Panc1 (cell line): ENCODE measurements at regions of chr9 and their contacts with region 1.

Region 1: DNA sequence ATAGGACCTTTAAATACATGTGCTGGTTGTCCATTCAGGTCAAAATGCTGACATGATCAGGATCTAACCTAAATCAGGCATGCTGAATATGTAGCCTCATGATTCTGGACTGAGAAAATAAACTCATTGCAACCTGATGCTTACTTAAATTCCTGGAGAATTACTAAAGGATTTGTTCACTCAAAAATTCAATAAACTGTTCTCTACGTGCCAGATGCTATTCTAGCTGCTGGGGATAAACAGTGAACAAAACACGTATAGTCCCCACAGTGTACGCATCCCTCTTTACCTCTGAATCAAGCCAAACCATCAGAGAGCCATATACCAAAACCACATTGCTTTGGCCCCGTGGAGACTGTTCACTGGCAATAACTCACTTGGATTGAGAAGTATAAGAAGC is 6.1 kb downstream of the SCAI start:
- DNase-seq: no peak
- ATAC-seq: no peak
- H3K4me3 ChIP-seq: no peak overlapping the region
- H3K27ac ChIP-seq: no peak overlapping the region
- H3K4me1 ChIP-seq: no peaks in the 10 kb centered on the region
- H3K27me3 ChIP-seq: no peaks in the 10 kb centered on the region
- CTCF ChIP-seq: no peak

Region 2: GRCh38 chr9:124658165-124659017 is 478.8 kb before region 1 on chr9:
- CTCF ChIA-PET with region 1: no interaction called
- POLR2A ChIA-PET with region 1: no interaction called
- in situ Hi-C with region 1: no loop called
- intact Hi-C with region 1: no loop called
- DNase-seq: no peak
- ATAC-seq: peak; percentile 93
- H3K4me3 ChIP-seq: peak overlapping the region; percentile 73 to 77
- H3K27ac ChIP-seq: peak overlapping the region; percentile 98
- H3K4me1 ChIP-seq: peaks cover 36% of the 10 kb centered on the region
- H3K27me3 ChIP-seq: no peaks in the 10 kb centered on the region
- CTCF ChIP-seq: no peak

Region 3: GRCh38 chr9:125099816-125100215 is 37.4 kb before region 1 on chr9:
- CTCF ChIA-PET with region 1: no interaction called
- POLR2A ChIA-PET with region 1: no interaction called
- in situ Hi-C with region 1: no loop called
- intact Hi-C with region 1: loop called (anchors 2 kb)
- DNase-seq: no peak
- ATAC-seq: no peak
- H3K4me3 ChIP-seq: no peak overlapping the region
- H3K27ac ChIP-seq: no peak overlapping the region
- H3K4me1 ChIP-seq: no peaks in the 10 kb centered on the region
- H3K27me3 ChIP-seq: no peaks in the 10 kb centered on the region
- CTCF ChIP-seq: no peak

Region 4: DNA sequence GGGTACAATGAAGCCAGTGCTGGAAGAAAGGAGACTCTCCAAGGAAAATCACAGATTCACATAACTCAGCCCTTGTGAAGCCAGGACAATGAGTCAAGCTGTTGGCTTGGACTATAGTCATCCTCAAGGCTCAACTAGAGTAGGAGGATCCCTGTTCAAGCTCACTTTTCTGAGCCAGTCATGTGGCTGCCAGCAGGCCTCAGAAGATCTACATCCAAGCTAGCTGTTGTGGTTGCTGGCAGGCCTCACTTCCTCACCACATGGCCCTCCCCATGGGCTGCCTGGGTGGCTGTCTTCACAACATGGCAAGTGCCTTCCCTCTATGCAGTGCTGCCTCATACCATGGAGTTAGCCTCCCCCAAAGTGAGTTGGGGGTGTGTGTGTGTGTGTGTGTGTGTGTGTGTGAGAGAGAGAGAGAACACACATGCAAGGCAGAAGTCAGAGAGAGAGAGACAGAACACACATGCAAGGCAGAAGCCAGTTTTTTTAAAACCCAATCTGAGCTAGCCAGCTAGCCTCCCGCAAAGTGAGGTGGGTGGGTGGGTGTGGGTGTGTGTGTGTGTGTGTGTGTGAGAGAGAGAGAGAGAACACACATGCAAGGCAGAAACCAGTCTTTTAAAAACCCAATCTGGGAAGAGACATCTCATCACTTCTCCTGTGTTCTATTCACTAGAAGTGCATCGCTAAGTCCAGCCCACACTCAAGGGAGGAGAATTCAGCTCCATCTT is 11.0 kb before region 1 on chr9:
- CTCF ChIA-PET with region 1: no interaction called
- POLR2A ChIA-PET with region 1: no interaction called
- in situ Hi-C with region 1: no loop called
- intact Hi-C with region 1: no loop called
- DNase-seq: no peak
- ATAC-seq: no peak
- H3K4me3 ChIP-seq: no peak overlapping the region
- H3K27ac ChIP-seq: no peak overlapping the region
- H3K4me1 ChIP-seq: no peaks in the 10 kb centered on the region
- H3K27me3 ChIP-seq: no peaks in the 10 kb centered on the region
- CTCF ChIP-seq: no peak

Region 5: DNA sequence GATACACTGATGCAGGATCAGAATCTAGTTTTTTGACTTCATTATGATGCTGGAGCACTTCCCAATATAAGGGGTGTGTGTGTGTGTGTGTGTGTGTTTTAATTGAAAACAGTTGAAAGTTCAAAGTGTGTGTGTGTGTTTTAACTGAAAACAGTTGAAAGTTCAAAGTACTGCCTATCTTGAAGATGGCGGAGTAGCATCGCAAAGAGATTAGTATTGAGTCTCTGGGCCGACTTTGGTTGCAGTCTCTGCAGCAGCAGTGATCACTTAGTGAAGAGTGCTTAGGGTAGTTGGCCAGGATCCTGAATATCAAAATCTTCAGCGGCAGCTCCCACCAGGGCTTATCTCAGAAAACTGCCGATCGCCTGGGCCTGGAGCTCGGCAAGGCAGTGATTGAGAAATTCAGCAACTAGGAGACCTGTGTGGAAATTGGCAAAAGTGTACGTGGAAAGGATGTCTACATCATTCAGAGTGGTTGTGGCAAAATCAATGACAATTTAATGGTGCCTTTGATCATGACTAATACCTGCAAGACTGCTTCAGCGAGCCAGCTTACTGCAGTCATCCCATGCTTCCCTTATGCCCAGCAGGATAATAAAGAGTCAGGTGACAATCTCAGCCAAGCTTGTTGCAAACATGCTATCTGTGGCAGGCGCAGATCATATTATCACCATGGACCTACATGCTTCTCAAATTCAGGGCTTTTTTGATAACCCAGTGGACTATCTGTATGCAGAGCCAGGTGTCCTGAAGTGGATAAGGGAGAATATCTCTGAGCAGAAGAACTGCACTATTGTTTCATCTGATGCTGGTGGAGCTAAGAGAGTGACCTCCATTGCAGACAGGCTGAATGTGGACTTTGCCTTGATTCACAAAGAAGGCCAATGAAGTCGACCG is 13.4 kb after region 1 on chr9:
- CTCF ChIA-PET with region 1: no interaction called
- POLR2A ChIA-PET with region 1: no interaction called
- in situ Hi-C with region 1: no loop called
- intact Hi-C with region 1: no loop called
- DNase-seq: no peak
- ATAC-seq: no peak
- H3K4me3 ChIP-seq: no peak overlapping the region
- H3K27ac ChIP-seq: no peak overlapping the region
- H3K4me1 ChIP-seq: no peaks in the 10 kb centered on the region
- H3K27me3 ChIP-seq: no peaks in the 10 kb centered on the region
- CTCF ChIP-seq: no peak

Region 6: DNA sequence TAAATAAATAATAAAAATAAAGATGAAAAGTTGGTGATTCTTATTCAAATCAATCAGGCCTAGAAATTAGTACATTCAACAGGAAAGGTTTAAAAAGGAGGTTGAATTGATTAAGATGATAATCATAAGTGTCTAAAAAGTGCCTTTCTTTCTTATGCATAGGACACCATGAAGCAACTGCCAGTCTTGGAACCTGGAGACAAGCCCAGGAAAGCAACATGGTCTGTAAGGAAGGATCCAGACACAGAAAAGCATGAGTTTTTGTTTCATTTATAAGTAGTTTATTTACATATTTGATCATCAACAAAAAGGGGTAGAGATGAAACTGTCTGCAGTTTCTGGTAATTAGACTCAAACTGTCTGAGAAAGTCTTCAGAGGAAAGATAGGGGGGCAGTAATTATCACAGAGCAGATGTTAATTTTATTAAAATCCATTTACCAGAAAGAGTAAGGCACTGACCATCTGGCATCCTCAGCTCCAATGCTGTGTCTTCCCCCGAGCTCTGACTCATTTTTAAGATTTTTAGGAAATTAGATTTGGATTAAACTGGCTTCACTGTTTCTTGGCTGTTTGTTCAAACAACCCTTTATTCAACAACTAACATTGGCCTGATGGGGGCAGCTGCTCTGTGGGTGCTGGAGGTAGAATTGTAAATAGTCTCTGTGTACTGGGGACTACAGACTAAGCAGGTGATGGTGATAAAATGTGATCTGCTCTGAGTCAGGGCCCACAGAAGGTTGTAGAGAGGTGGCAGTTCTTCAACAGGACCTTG is 65.8 kb after region 1 on chr9:
- CTCF ChIA-PET with region 1: no interaction called
- POLR2A ChIA-PET with region 1: no interaction called
- in situ Hi-C with region 1: no loop called
- intact Hi-C with region 1: no loop called
- DNase-seq: no peak
- ATAC-seq: no peak
- H3K4me3 ChIP-seq: no peak overlapping the region
- H3K27ac ChIP-seq: no peak overlapping the region
- H3K4me1 ChIP-seq: peaks cover 6% of the 10 kb centered on the region
- H3K27me3 ChIP-seq: no peaks in the 10 kb centered on the region
- CTCF ChIP-seq: no peak